AG04450 (cell line): ENCODE measurements at regions of chr6 and their contacts with region 1.

Region 1: GRCh38 chr6:134647861-134648260 is 302.0 kb downstream of the ALDH8A1 start:
- DNase-seq: no peak
- H3K4me3 ChIP-seq: no peak overlapping the region
- H3K27ac ChIP-seq: no peak overlapping the region
- H3K27me3 ChIP-seq: no peaks in the 10 kb centered on the region
- CTCF ChIP-seq: no peak

Region 2: DNA sequence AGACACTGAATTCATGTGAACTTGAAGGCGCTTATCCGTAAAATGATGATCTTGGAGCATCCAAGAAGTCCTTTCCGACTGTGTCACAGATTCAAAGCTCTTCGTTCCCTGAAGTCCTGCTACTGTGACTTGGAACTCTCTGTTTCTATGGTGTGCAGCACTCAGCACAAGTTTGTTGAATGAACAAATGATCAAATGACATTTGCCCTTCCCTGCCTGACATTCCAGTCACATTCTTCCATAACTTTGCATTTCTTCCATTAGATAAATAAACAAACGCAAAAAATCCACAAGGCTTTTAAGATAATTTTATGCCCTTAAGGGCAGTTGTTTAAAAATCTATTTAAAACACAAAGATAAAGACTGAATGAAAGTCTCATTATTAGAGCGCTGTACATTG is 369.9 kb before region 1 on chr6:
- CTCF ChIA-PET with region 1: no interaction called
- POLR2A ChIA-PET with region 1: interaction called, 12 read pairs
- DNase-seq: no peak
- H3K4me3 ChIP-seq: no peak overlapping the region
- H3K27ac ChIP-seq: no peak overlapping the region
- H3K27me3 ChIP-seq: no peaks in the 10 kb centered on the region
- CTCF ChIP-seq: no peak

Region 3: GRCh38 chr6:134903448-134903847 is 255.6 kb after region 1 on chr6:
- CTCF ChIA-PET with region 1: no interaction called
- POLR2A ChIA-PET with region 1: no interaction called
- DNase-seq: no peak
- H3K4me3 ChIP-seq: no peak overlapping the region
- H3K27ac ChIP-seq: no peak overlapping the region
- H3K27me3 ChIP-seq: no peaks in the 10 kb centered on the region
- CTCF ChIP-seq: no peak